CD8-positive, alpha-beta T cell (primary cell): ENCODE measurements at regions of chr6 and their contacts with region 1.

Region 1: DNA sequence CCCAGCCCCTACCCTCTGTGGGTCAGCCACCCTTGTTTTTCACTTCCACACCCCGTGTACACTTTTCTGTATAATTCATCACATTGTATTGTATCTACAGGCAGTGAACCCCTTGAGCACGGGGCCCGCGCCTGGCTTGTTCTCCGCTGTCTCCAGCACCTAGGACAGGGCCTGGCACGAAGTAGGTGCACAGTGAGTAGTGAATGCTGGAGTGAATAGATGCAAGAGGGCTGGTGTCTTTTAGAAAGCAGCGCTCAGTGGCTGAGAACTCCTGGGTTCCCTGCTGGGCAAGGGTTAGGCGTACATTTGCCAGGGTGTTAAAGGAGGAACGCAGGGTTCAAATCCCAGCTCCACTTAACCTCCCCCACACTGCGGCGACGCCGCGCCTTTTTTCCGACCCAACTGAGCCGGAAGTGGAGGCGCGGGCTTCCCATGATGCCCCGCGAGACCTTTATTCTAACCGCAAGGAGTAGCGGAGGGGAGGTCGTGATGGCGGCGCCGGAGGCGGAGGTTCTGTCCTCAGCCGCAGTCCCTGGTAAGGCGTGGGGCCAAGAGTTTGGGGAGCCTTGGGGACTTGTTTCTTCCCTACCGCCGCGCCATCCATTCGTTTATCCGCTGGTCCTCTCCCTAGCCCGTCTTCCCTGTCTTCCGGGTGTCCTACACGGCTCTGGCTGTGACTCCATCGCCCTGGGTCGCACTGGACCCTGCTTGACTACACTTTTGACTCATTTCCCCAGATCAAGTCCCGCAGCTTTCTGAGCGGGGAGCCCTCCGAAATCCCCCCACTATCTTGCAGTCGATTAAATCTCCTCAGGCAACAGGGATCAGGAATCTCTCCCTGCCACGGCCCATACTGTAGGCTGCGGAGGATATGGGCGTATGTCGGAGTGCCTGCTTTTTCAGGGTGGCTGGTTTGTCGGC is at the start of gene MAD2L1BP:
- DNase-seq: peak; percentile 66 to 90 (median 86)
- ATAC-seq: peak; percentile 88
- H3K4me3 ChIP-seq: peak within 1 kb of the TSS; percentile 79 to 96
- H3K4me3 Mint-ChIP-seq: peak within 1 kb of the TSS; percentile 98
- H3K27ac ChIP-seq: peak within 1 kb of the TSS; percentile 76 to 84
- H3K27ac Mint-ChIP-seq: peak within 1 kb of the TSS; percentile 94
- H3K4me1 ChIP-seq: peaks cover 32% of the 10 kb centered on the region
- H3K4me1 Mint-ChIP-seq: peaks cover 53% of the 10 kb centered on the region
- H3K27me3 ChIP-seq: no peaks in the 10 kb centered on the region
- H3K27me3 Mint-ChIP-seq: no peaks in the 10 kb centered on the region
- CTCF ChIP-seq: no peak
- total RNA-seq, gene MAD2L1BP: 29.2 TPM

Region 2: DNA sequence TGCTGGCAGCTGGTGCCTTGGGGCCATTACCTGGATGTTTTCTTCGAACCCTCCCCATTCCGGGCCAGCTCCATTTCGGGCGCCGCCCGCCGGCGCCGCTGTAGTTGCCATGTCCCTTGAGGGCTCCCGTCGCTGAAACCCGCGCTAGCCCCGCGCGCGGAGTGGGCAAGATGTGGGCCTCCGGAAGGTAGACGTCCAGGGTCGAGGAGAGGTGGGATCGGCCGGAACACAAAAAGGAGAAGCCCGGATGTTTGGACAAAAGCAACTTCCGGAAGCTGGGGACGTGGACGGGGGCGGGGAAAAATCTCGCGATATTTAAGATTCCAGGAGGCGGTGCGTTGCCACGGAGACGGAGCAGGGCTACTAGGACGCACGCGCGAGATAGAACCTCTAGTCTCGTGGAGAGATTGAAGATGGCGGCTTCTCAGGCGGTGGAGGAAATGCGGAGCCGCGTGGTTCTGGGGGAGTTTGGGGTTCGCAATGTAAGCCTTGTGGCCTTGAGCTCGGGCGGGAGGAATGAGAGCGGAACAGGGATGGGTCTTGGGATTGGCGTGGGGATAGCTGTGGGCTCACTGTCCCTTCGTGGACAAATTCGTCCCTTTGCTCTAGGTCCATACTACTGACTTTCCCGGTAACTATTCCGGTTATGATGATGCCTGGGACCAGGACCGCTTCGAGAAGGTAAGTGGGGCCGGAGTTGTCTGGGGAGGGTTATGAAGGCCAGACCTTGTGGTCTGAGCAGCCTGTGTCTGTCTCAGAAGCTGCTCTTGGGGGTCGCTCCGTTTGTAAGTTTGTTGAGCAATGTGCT is 118.7 kb before region 1 on chr6 and contains the starts of genes POLR1C and YIPF3:
- CTCF ChIA-PET with region 1: no interaction called
- POLR2A ChIA-PET with region 1: no interaction called
- intact Hi-C with region 1: no loop called
- DNase-seq: peak; percentile 90 to 98 (median 97)
- ATAC-seq: peak; percentile 96
- H3K4me3 ChIP-seq: peak within 1 kb of the TSS; percentile 91 to 98
- H3K4me3 Mint-ChIP-seq: no peak within 1 kb of the TSS
- H3K27ac ChIP-seq: peak within 1 kb of the TSS; percentile 83 to 94
- H3K27ac Mint-ChIP-seq: no peak within 1 kb of the TSS
- H3K4me1 ChIP-seq: peaks cover 34% of the 10 kb centered on the region
- H3K4me1 Mint-ChIP-seq: peaks cover 33% of the 10 kb centered on the region
- H3K27me3 ChIP-seq: no peaks in the 10 kb centered on the region
- H3K27me3 Mint-ChIP-seq: no peaks in the 10 kb centered on the region
- CTCF ChIP-seq: no peak
- total RNA-seq, gene POLR1C: 73.9 to 74.0 TPM
- total RNA-seq, gene YIPF3: 51.0 to 52.5 TPM

Region 3: GRCh38 chr6:43687437-43688347 is 52.0 kb after region 1 on chr6 and contains the start of gene MRPS18A:
- CTCF ChIA-PET with region 1: no interaction called
- POLR2A ChIA-PET with region 1: no interaction called
- intact Hi-C with region 1: loop called in 1 of 2 experiments (anchors 5 kb)
- DNase-seq: peak; percentile 47 to 86 (median 77)
- ATAC-seq: peak; percentile 94
- H3K4me3 ChIP-seq: peak within 1 kb of the TSS; percentile 94 to 97
- H3K4me3 Mint-ChIP-seq: peak within 1 kb of the TSS; percentile 95
- H3K27ac ChIP-seq: peak within 1 kb of the TSS; percentile 68 to 72
- H3K27ac Mint-ChIP-seq: peak within 1 kb of the TSS; percentile 88
- H3K4me1 ChIP-seq: peaks cover 25% of the 10 kb centered on the region
- H3K4me1 Mint-ChIP-seq: peaks cover 49% of the 10 kb centered on the region
- H3K27me3 ChIP-seq: no peaks in the 10 kb centered on the region
- H3K27me3 Mint-ChIP-seq: no peaks in the 10 kb centered on the region
- CTCF ChIP-seq: no peak
- total RNA-seq, gene MRPS18A: 43.9 to 44.6 TPM

Region 4: GRCh38 chr6:45398075-45398839 is 1762.6 kb after region 1 on chr6:
- CTCF ChIA-PET with region 1: no interaction called
- POLR2A ChIA-PET with region 1: no interaction called
- intact Hi-C with region 1: no loop called
- DNase-seq: no peak
- ATAC-seq: no peak
- H3K4me3 ChIP-seq: no peak overlapping the region
- H3K4me3 Mint-ChIP-seq: no peak overlapping the region
- H3K27ac ChIP-seq: no peak overlapping the region
- H3K27ac Mint-ChIP-seq: no peak overlapping the region
- H3K4me1 ChIP-seq: no peaks in the 10 kb centered on the region
- H3K4me1 Mint-ChIP-seq: no peaks in the 10 kb centered on the region
- H3K27me3 ChIP-seq: peaks cover 0 to 5% of the 10 kb centered on the region in 2 experiments
- H3K27me3 Mint-ChIP-seq: peaks cover 4% of the 10 kb centered on the region
- CTCF ChIP-seq: no peak